Vagina (tissue), 2 donors: ENCODE measurements at regions of chr13 and their contacts with region 1.

Region 1: GRCh38 chr13:113928685-113929627 is 44.9 kb downstream of the C13orf46 start:
- DNase-seq: peak in 1 of 2 donors; percentile 96
- H3K4me3 ChIP-seq: no peak overlapping the region
- H3K27ac ChIP-seq: peak overlapping the region; percentile 60
- H3K4me1 ChIP-seq: peaks cover 38% of the 10 kb centered on the region
- H3K27me3 ChIP-seq: no peaks in the 10 kb centered on the region
- CTCF ChIP-seq: no peak
- POLR2A ChIP-seq: no peak

Region 2: DNA sequence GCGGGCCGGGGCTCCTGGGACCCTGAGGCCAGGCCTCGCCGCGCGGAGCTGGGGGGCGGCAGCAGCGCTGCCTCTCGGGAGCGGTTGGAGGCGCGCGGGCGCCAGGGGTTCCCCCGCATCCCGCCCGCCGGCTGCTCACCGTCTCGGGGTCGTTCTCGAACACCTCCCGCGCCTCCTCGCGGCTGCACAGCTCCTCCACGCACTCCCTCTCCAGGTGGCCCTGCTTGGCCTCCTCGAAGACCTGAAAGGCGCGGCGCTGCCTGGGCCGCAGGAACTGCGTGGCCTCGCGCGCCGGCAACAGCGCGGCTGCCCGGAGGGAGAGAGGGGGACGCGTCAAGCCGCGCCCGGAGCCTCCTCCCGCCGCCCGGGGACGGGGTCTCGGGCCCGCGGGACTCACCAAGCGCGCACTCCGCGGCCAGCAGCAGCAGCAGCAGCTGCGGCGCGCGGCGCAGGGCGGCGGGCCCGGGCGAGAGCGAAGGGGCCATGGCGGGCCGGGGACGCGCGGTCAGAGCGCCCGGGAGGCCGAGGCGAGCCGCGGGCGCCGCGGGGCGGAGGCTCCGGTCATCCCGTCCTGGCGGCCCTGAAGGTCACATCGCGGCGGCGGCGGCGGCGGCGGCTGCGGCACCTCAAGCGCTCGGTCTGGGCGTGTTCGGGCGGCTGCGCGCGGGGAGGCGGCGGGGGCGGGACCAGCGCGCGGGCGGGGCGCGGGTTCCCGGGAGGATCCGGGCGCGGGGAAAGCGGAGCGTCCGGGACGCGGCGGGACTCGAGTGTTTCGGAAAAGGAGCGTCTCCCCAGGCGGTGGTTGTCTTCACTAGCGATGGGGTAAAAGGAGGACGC is 65.3 kb before region 1 on chr13 and contains the start of gene GAS6:
- intact Hi-C with region 1: loop called (anchors 10 kb)
- DNase-seq: no peak
- H3K4me3 ChIP-seq: peak within 1 kb of the TSS; percentile 63 to 98
- H3K27ac ChIP-seq: peak within 1 kb of the TSS; percentile 95
- H3K4me1 ChIP-seq: peaks cover 39% of the 10 kb centered on the region
- H3K27me3 ChIP-seq: no peaks in the 10 kb centered on the region
- CTCF ChIP-seq: no peak
- POLR2A ChIP-seq: peak in 1 of 2 donors; percentile 54
- total RNA-seq, gene GAS6: 215 TPM

Region 3: DNA sequence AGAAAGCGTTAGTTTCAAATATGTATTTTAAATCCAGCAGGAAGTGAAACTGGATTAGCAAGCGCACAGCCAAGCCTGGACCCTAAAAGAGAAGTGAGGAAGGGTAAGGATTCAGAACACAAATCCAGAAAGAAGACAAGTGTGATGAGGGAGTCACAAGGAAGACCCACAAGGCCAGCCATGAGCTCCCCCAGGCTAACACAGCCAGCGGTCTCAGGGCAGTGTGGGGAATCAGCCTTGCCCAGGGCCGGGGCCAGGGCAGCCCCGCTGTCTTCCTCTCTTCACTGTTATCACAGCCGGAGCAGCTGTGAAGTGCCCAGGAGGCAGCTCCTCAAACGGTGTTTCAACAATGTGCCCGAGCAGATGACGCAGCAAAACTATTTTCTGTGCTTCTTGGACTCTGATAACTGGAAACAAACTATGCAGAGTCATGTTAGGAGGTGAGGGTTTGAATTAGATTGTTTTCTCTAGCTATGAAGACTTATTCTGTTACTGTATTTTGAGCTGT is 293.6 kb after region 1 on chr13:
- intact Hi-C with region 1: no loop called
- DNase-seq: peak in 1 of 2 donors; percentile 75
- H3K4me3 ChIP-seq: no peak overlapping the region
- H3K27ac ChIP-seq: no peak overlapping the region
- H3K4me1 ChIP-seq: peaks cover 6% of the 10 kb centered on the region
- H3K27me3 ChIP-seq: no peaks in the 10 kb centered on the region
- CTCF ChIP-seq: no peak
- POLR2A ChIP-seq: no peak